Heart left ventricle (tissue), 16 donors: ENCODE measurements at regions of chr3 and their contacts with region 1.

Region 1: GRCh38 chr3:12287727-12288191 is 1.1 kb upstream of the PPARG start:
- DNase-seq: peak; percentile 66 to 79 (median 74)
- ATAC-seq: peak; percentile 70 to 91 (median 88)
- H3K4me3 ChIP-seq: peak overlapping the region; percentile 77 to 97 (median 90)
- H3K27ac ChIP-seq: peak overlapping the region; percentile 77 to 92 (median 87)
- H3K4me1 ChIP-seq: peaks cover 0 to 15% (median 6%) of the 10 kb centered on the region in 12 donors
- H3K27me3 ChIP-seq: peaks cover 0 to 7% (median 0%) of the 10 kb centered on the region in 9 donors
- CTCF ChIP-seq: peak in 1 of 12 donors; percentile 6
- POLR2A ChIP-seq: no peak

Region 2: GRCh38 chr3:12135029-12135657 is 152.6 kb before region 1 on chr3:
- intact Hi-C with region 1: loop called in 5 of 10 experiments (anchors 5 to 10 kb)
- DNase-seq: peak; percentile 58 to 86 (median 72)
- ATAC-seq: peak; percentile 65 to 90 (median 86)
- H3K4me3 ChIP-seq: no peak overlapping the region
- H3K27ac ChIP-seq: no peak overlapping the region
- H3K4me1 ChIP-seq: peaks cover 0 to 25% (median 14%) of the 10 kb centered on the region in 12 donors
- H3K27me3 ChIP-seq: peaks cover 0 to 18% (median 0%) of the 10 kb centered on the region in 9 donors
- CTCF ChIP-seq: peak; percentile 82 to 94 (median 90)
- POLR2A ChIP-seq: no peak

Region 3: GRCh38 chr3:12175844-12176453 is 111.8 kb before region 1 on chr3:
- intact Hi-C with region 1: loop called in 2 of 10 experiments (anchors 5 kb)
- DNase-seq: peak; percentile 56 to 74 (median 70)
- ATAC-seq: peak; percentile 82 to 90 (median 84)
- H3K4me3 ChIP-seq: no peak overlapping the region
- H3K27ac ChIP-seq: no peak overlapping the region
- H3K4me1 ChIP-seq: peaks cover 9 to 55% (median 29%) of the 10 kb centered on the region in 12 donors
- H3K27me3 ChIP-seq: no peaks in the 10 kb centered on the region
- CTCF ChIP-seq: peak; percentile 77 to 93 (median 88)
- POLR2A ChIP-seq: no peak

Region 4: DNA sequence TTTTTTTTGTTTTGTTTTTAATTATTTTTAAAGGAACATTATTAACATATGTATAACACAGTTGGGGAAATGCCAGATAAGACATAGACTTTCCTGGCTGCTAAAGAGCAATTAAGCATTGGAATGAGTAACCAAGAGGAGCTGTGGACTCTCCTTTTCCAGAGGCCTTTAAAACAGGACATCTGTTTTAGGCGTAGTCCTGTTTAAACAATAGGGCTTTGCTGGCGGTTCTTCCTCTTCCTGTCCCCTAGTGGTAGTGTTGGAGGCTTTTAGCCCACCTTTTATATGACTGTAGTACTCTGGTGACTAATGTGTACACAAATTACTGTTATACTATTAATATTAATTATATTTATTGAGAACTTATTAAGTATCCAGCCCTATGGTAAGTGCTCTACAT is 83.0 kb after region 1 on chr3:
- intact Hi-C with region 1: loop called in 1 of 10 experiments (anchors 5 kb)
- DNase-seq: peak in 1 of 5 donors; percentile 24
- ATAC-seq: peak; percentile 67 to 93 (median 80)
- H3K4me3 ChIP-seq: no peak overlapping the region
- H3K27ac ChIP-seq: peak overlapping the region in 9 of 12 donors; percentile 2 to 68 (median 55)
- H3K4me1 ChIP-seq: peaks cover 0 to 43% (median 17%) of the 10 kb centered on the region in 12 donors
- H3K27me3 ChIP-seq: no peaks in the 10 kb centered on the region
- CTCF ChIP-seq: peak in 11 of 12 donors; percentile 16 to 52 (median 34)
- POLR2A ChIP-seq: no peak

Region 5: DNA sequence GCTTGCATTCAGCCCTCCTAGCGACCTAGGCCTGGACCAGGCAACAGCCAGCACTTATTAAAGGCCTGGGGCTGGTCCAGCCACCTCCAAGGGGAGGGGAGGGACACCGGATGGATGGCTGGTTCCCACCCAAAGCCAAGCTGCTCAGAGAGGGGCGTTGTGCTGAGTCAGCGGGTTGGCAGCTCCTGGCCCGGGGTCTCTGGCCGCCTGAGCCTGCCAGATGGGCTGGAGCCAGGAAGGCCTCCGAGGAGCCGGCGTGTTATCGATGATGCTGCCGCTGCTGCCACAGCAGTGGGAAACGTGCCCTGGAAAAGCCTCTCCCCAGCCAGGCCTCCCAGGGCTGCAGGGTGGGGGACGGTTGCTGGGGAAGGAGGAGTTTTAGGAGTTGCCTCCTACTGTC is 153.2 kb after region 1 on chr3:
- intact Hi-C with region 1: loop called in 2 of 10 experiments (anchors 10 kb)
- DNase-seq: peak; percentile 62 to 87 (median 83)
- ATAC-seq: peak; percentile 56 to 85 (median 75)
- H3K4me3 ChIP-seq: no peak overlapping the region
- H3K27ac ChIP-seq: peak overlapping the region in 10 of 12 donors; percentile 23 to 77 (median 68)
- H3K4me1 ChIP-seq: peaks cover 0 to 60% (median 29%) of the 10 kb centered on the region in 12 donors
- H3K27me3 ChIP-seq: no peaks in the 10 kb centered on the region
- CTCF ChIP-seq: no peak
- POLR2A ChIP-seq: no peak

Region 6: GRCh38 chr3:13254028-13254951 is 966.5 kb after region 1 on chr3:
- intact Hi-C with region 1: no loop called
- DNase-seq: peak in 2 of 5 donors; percentile 23 to 53
- ATAC-seq: no peak
- H3K4me3 ChIP-seq: no peak overlapping the region
- H3K27ac ChIP-seq: no peak overlapping the region
- H3K4me1 ChIP-seq: peaks cover 0 to 7% (median 0%) of the 10 kb centered on the region in 12 donors
- H3K27me3 ChIP-seq: peaks cover 0 to 6% (median 0%) of the 10 kb centered on the region in 9 donors
- CTCF ChIP-seq: no peak
- POLR2A ChIP-seq: no peak